Spleen (tissue), 13 donors: ENCODE measurements at regions of chrX and their contacts with region 1.

Region 1: DNA sequence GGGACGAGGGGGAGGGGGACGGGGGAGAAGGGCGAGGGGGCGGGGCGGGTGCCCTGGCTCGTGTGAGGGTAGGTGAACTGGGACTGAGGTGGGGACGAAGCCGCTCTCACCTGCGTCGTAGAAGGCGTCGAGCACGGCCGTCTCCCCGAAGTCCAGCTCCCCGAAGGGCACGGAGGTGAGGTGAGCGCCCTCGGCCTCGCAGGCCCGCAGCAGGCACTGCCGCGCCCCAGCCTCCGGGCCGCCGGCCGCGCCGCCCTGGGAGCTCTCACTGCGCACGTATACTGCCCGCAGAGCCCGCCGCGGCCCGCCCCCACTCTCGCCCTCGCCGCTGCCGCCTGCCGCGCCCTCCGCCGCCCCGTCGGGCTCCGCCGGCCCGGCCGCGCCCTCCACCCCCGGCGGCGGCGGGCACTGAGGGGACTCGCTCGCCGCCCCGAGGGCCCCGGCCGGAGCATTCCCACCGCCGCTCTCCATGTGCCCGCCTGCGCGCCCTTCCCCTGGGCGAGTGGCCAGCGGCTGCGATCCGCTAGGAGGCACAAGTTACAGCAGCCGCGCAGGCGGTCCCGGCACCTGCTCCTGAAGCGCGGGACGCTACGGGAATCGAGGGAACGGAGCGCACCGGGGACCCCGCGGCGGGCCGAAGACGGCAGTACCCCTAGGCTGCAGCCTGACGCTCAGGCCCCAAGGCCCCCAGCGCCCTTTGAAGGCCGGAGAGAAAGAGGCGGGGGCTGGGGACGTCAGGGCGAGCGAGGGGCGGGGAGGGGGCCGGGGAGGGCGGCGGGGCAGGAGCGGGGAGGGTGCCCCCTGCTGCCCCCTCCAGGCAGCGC is at the start of gene MAP3K15:
- DNase-seq: peak; percentile 80
- H3K4me3 ChIP-seq: peak within 1 kb of the TSS; percentile 23 to 70 (median 44)
- H3K27ac ChIP-seq: peak within 1 kb of the TSS in 7 of 8 donors; percentile 22 to 67 (median 48)
- H3K4me1 ChIP-seq: peaks cover 0 to 10% (median 5%) of the 10 kb centered on the region in 6 donors
- H3K27me3 ChIP-seq: peaks cover 0 to 27% (median 5%) of the 10 kb centered on the region in 7 donors
- CTCF ChIP-seq: peak in 1 of 11 experiments; percentile 31
- POLR2A ChIP-seq: no peak
- total RNA-seq, gene MAP3K15: 3.6 to 11.3 (median 8.0) TPM

Region 2: GRCh38 chrX:19372170-19372546 is 142.8 kb before region 1 on chrX:
- intact Hi-C with region 1: loop called (anchors 10 kb)
- DNase-seq: peak; percentile 86
- H3K4me3 ChIP-seq: peak overlapping the region; percentile 13 to 68 (median 32)
- H3K27ac ChIP-seq: peak overlapping the region in 6 of 8 donors; percentile 22 to 69 (median 58)
- H3K4me1 ChIP-seq: peaks cover 0 to 14% (median 2%) of the 10 kb centered on the region in 6 donors
- H3K27me3 ChIP-seq: no peaks in the 10 kb centered on the region
- CTCF ChIP-seq: peak; percentile 41 to 81 (median 69)
- POLR2A ChIP-seq: no peak

Region 3: GRCh38 chrX:19593690-19594089 is 78.7 kb after region 1 on chrX:
- intact Hi-C with region 1: no loop called
- DNase-seq: no peak
- H3K4me3 ChIP-seq: no peak overlapping the region
- H3K27ac ChIP-seq: no peak overlapping the region
- H3K4me1 ChIP-seq: peaks cover 0 to 15% (median 0%) of the 10 kb centered on the region in 6 donors
- H3K27me3 ChIP-seq: no peaks in the 10 kb centered on the region
- CTCF ChIP-seq: peak in 9 of 11 experiments; percentile 11 to 53 (median 33)
- POLR2A ChIP-seq: no peak